Sigmoid colon (tissue), 7 donors: ENCODE measurements at regions of chr11 and their contacts with region 1.

Region 1: GRCh38 chr11:114340311-114341131 is 44.3 kb downstream of the NNMT start:
- DNase-seq: peak; percentile 81
- H3K4me3 ChIP-seq: peak overlapping the region in 1 of 4 donors; percentile 14
- H3K27ac ChIP-seq: peak overlapping the region in 1 of 4 donors; percentile 27
- H3K4me1 ChIP-seq: peaks cover 0 to 10% (median 7%) of the 10 kb centered on the region in 4 donors
- H3K27me3 ChIP-seq: no peaks in the 10 kb centered on the region
- CTCF ChIP-seq: peak; percentile 70 to 81 (median 74)
- EP300 ChIP-seq: no peak
- POLR2A ChIP-seq: no peak

Region 2: DNA sequence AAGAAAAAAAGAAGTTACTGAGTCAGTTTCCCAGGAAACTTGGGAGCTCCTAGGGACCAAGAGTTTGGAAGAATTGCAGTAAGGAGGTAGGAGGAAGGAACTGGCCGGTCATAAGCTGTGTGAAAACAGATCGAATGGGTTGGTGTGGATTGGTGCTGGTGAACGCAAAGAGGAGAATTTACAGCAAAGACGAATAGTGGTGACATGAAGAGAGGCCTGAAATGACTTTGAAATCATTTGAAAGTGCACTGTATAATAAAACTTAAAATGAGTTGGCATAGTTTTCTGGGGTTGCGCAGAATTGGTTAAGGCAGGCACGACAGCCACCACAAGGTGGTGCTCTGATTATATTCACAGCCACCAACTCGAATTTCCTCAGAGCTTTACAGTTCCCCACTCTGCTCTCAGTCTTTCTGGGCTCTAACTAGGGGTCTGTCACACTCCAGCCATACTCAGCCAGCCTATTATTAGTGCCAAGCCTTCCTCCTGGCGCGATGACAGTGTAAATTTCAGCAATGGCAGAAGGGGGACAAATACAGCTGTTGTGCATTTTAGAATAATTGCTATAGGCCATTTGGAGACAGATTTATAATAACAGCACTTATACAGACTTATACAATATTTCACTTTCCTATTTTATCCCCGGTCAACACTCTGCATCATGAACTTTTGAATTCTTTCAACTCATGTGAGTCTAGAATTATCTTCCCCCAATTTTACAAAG is 444.2 kb before region 1 on chr11:
- intact Hi-C with region 1: loop called (anchors 5 kb)
- DNase-seq: no peak
- H3K4me3 ChIP-seq: no peak overlapping the region
- H3K27ac ChIP-seq: no peak overlapping the region
- H3K4me1 ChIP-seq: no peaks in the 10 kb centered on the region
- H3K27me3 ChIP-seq: no peaks in the 10 kb centered on the region
- CTCF ChIP-seq: peak; percentile 28 to 79 (median 58)
- EP300 ChIP-seq: no peak
- POLR2A ChIP-seq: no peak

Region 3: GRCh38 chr11:114307524-114308203 is 32.9 kb before region 1 on chr11:
- intact Hi-C with region 1: no loop called
- DNase-seq: peak; percentile 80
- H3K4me3 ChIP-seq: no peak overlapping the region
- H3K27ac ChIP-seq: peak overlapping the region; percentile 38 to 66 (median 45)
- H3K4me1 ChIP-seq: peaks cover 0 to 18% (median 8%) of the 10 kb centered on the region in 4 donors
- H3K27me3 ChIP-seq: no peaks in the 10 kb centered on the region
- CTCF ChIP-seq: no peak
- EP300 ChIP-seq: peak in 1 of 4 donors; percentile 30
- POLR2A ChIP-seq: no peak

Region 4: DNA sequence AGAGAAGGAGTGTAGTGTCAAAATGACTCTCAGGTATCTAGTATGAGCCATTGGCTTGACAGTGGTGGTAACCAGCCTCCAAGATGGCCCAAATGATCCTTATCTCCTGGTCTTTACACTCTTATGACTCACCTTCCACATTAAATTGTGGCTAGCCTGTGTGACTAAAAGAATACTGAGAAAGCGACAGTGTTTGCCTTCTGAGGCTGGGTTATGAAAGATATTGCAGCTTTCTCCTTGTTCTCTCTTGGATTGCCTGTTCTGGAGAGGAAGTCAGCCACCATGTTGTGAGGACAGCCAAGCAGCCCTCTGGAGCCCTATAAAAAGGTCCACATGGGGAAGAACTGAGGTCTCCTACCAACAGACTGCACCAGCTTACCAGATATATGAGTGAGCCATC is 44.0 kb after region 1 on chr11:
- intact Hi-C with region 1: no loop called
- DNase-seq: no peak
- H3K4me3 ChIP-seq: no peak overlapping the region
- H3K27ac ChIP-seq: no peak overlapping the region
- H3K4me1 ChIP-seq: peaks cover 0 to 6% (median 3%) of the 10 kb centered on the region in 4 donors
- H3K27me3 ChIP-seq: no peaks in the 10 kb centered on the region
- CTCF ChIP-seq: no peak
- EP300 ChIP-seq: no peak
- POLR2A ChIP-seq: no peak

Region 5: GRCh38 chr11:114606003-114606801 is 265.7 kb after region 1 on chr11:
- intact Hi-C with region 1: loop called (anchors 5 kb)
- DNase-seq: no peak
- H3K4me3 ChIP-seq: no peak overlapping the region
- H3K27ac ChIP-seq: no peak overlapping the region
- H3K4me1 ChIP-seq: no peaks in the 10 kb centered on the region
- H3K27me3 ChIP-seq: no peaks in the 10 kb centered on the region
- CTCF ChIP-seq: peak in 1 of 4 experiments; percentile 20
- EP300 ChIP-seq: no peak
- POLR2A ChIP-seq: no peak

Region 6: GRCh38 chr11:114762408-114762807 is 421.9 kb after region 1 on chr11:
- intact Hi-C with region 1: loop called (anchors 1 kb)
- DNase-seq: peak; percentile 80
- H3K4me3 ChIP-seq: no peak overlapping the region
- H3K27ac ChIP-seq: no peak overlapping the region
- H3K4me1 ChIP-seq: no peaks in the 10 kb centered on the region
- H3K27me3 ChIP-seq: no peaks in the 10 kb centered on the region
- CTCF ChIP-seq: peak in 3 of 4 experiments; percentile 46 to 77 (median 71)
- EP300 ChIP-seq: no peak
- POLR2A ChIP-seq: no peak